Ovary (tissue), 10 donors: ENCODE measurements at regions of chr14 and their contacts with region 1.

Region 1: GRCh38 chr14:105793836-105794235 is 267.5 kb downstream of the TMEM121 start:
- DNase-seq: no peak
- H3K4me3 ChIP-seq: no peak overlapping the region
- H3K27ac ChIP-seq: no peak overlapping the region
- H3K4me1 ChIP-seq: no peaks in the 10 kb centered on the region
- H3K27me3 ChIP-seq: no peaks in the 10 kb centered on the region
- CTCF ChIP-seq: no peak
- EP300 ChIP-seq: no peak
- POLR2A ChIP-seq: no peak

Region 2: DNA sequence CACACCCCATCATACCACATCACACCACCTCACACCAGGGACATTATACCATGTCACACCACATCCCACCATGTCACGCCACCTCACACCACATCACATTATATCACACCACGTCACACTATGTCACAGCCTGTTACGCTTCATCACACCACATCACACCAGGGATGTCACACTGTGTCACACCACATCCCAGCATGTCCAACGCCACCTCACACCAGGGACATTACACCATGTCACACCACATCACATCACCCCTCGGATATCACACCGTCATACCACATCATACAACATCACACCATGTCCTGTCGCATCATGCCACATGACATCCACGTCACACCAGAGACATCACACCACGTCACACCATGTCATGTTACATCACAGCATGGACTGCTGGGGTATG is 32.0 kb before region 1 on chr14:
- intact Hi-C with region 1: no loop called
- DNase-seq: peak in 1 of 5 donors; percentile 5
- H3K4me3 ChIP-seq: no peak overlapping the region
- H3K27ac ChIP-seq: no peak overlapping the region
- H3K4me1 ChIP-seq: no peaks in the 10 kb centered on the region
- H3K27me3 ChIP-seq: no peaks in the 10 kb centered on the region
- CTCF ChIP-seq: no peak
- EP300 ChIP-seq: no peak
- POLR2A ChIP-seq: no peak

Region 3: GRCh38 chr14:105840266-105841021 is 46.6 kb after region 1 on chr14:
- intact Hi-C with region 1: loop called in 1 of 4 experiments (anchors 2 kb)
- DNase-seq: peak in 1 of 5 donors; percentile 21
- H3K4me3 ChIP-seq: no peak overlapping the region
- H3K27ac ChIP-seq: no peak overlapping the region
- H3K4me1 ChIP-seq: no peaks in the 10 kb centered on the region
- H3K27me3 ChIP-seq: no peaks in the 10 kb centered on the region
- CTCF ChIP-seq: no peak
- EP300 ChIP-seq: no peak
- POLR2A ChIP-seq: no peak

Region 4: DNA sequence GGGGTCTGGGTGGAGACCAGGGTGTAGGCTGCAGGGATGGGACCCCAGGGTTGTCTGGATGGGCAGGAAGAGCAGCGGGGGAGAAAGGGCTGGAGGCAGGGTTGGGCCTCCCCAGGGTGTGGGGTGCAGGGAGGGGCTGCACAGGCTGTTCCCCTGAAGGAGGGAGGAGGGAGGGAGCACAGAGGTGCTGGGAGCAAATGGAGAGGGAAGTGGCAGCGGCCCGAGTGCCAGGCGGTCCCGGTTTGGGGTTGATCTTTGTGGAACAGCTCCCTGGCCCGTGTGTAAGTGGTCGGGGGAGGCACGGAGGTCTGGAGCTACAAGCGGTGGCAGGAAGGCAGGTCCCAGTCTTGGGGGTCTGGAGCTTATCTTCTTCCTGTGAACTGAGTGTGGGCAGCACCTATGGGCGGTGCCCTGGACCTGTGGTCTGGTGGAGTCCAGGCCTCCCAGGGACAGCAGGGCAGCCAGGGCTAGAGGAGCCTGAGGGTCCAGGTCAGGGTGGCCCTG is 124.1 kb after region 1 on chr14:
- intact Hi-C with region 1: no loop called
- DNase-seq: peak in 1 of 5 donors; percentile 9
- H3K4me3 ChIP-seq: no peak overlapping the region
- H3K27ac ChIP-seq: no peak overlapping the region
- H3K4me1 ChIP-seq: no peaks in the 10 kb centered on the region
- H3K27me3 ChIP-seq: no peaks in the 10 kb centered on the region
- CTCF ChIP-seq: no peak
- EP300 ChIP-seq: no peak
- POLR2A ChIP-seq: no peak